Ascending aorta (tissue), 2 donors: ENCODE measurements at regions of chr1 and their contacts with region 1.

Region 1: GRCh38 chr1:50936321-50936720 is 23.7 kb downstream of the FAF1 start:
- DNase-seq: no peak
- H3K4me3 ChIP-seq: no peak overlapping the region
- H3K27ac ChIP-seq: no peak overlapping the region
- H3K4me1 ChIP-seq: no peaks in the 10 kb centered on the region
- H3K27me3 ChIP-seq: no peaks in the 10 kb centered on the region
- CTCF ChIP-seq: no peak

Region 2: DNA sequence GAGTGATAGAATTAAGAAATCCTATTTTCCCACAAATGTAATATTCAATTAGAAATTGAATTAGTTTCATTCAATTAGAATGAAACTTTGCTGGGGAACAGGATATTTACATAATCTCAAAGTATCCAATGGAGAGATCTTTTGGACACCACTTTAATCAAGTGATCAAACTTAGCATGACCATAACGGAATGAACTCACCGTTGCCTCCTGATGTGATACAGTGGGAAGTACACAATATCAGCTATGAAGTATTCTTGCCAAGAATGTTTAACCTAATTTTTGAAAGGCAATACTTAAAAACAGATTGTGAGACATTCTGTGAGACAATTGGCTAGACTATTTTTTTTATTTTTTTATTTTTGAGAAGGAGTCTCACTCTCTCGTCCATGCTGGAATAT is 50.3 kb after region 1 on chr1:
- intact Hi-C with region 1: loop called (anchors 5 kb)
- DNase-seq: no peak
- H3K4me3 ChIP-seq: no peak overlapping the region
- H3K27ac ChIP-seq: no peak overlapping the region
- H3K4me1 ChIP-seq: no peaks in the 10 kb centered on the region
- H3K27me3 ChIP-seq: no peaks in the 10 kb centered on the region
- CTCF ChIP-seq: no peak

Region 3: GRCh38 chr1:51906306-51907078 is 970.2 kb after region 1 on chr1:
- intact Hi-C with region 1: no loop called
- DNase-seq: no peak
- H3K4me3 ChIP-seq: no peak overlapping the region
- H3K27ac ChIP-seq: no peak overlapping the region
- H3K4me1 ChIP-seq: no peaks in the 10 kb centered on the region
- H3K27me3 ChIP-seq: no peaks in the 10 kb centered on the region
- CTCF ChIP-seq: no peak